Breast epithelium (tissue), 4 donors: ENCODE measurements at regions of chr15 and their contacts with region 1.

Region 1: GRCh38 chr15:95194746-95195145 is 963.4 kb downstream of the MCTP2 start:
- DNase-seq: no peak
- H3K4me3 ChIP-seq: no peak overlapping the region
- H3K27ac ChIP-seq: no peak overlapping the region
- H3K4me1 ChIP-seq: no peaks in the 10 kb centered on the region
- H3K27me3 ChIP-seq: no peaks in the 10 kb centered on the region
- CTCF ChIP-seq: no peak
- POLR2A ChIP-seq: no peak

Region 2: DNA sequence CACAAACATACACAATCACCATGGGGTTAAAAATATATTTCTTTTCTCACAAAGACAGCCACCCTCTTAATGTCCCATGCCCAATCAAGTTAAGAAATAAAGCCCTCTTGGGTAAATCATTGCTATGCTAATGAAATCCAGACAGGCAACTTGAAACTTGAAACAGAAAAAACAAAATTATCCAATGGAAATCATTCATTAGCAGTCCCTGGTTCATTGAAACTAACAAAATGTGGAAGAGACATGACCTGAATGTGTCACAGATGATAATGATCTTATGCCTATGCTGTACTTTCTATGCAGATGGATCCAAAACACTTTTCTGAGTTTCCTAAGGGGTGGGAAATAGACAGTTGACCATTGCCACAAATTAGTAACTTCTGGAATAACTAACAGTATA is 20.3 kb after region 1 on chr15:
- intact Hi-C with region 1: loop called (anchors 2 kb)
- DNase-seq: no peak
- H3K4me3 ChIP-seq: no peak overlapping the region
- H3K27ac ChIP-seq: no peak overlapping the region
- H3K4me1 ChIP-seq: no peaks in the 10 kb centered on the region
- H3K27me3 ChIP-seq: no peaks in the 10 kb centered on the region
- CTCF ChIP-seq: no peak
- POLR2A ChIP-seq: no peak

Region 3: GRCh38 chr15:96020133-96020532 is 825.4 kb after region 1 on chr15:
- intact Hi-C with region 1: no loop called
- DNase-seq: peak in 1 of 2 donors; percentile 61
- H3K4me3 ChIP-seq: no peak overlapping the region
- H3K27ac ChIP-seq: peak overlapping the region in 1 of 2 donors; percentile 55
- H3K4me1 ChIP-seq: peaks cover 0 to 5% of the 10 kb centered on the region in 2 donors
- H3K27me3 ChIP-seq: no peaks in the 10 kb centered on the region
- CTCF ChIP-seq: no peak
- POLR2A ChIP-seq: no peak